HCT116 (cell line): ENCODE measurements at regions of chr2 and their contacts with region 1.

Region 1: GRCh38 chr2:68121873-68122679 is 35.6 kb upstream of the PNO1 start:
- DNase-seq: peak; percentile 70
- ATAC-seq: peak; percentile 91
- H3K4me3 ChIP-seq: no peak overlapping the region
- H3K27ac ChIP-seq: no peak overlapping the region
- H3K4me1 ChIP-seq: peaks cover 0 to 4% of the 10 kb centered on the region in 2 experiments; a peak in 1 of 4 replicates
- H3K27me3 ChIP-seq: no peaks in the 10 kb centered on the region
- CTCF ChIP-seq: peak; percentile 91 to 98 (median 97)
- POLR2A ChIP-seq: no peak
- RAD21 ChIP-seq: peak; percentile 95

Region 2: DNA sequence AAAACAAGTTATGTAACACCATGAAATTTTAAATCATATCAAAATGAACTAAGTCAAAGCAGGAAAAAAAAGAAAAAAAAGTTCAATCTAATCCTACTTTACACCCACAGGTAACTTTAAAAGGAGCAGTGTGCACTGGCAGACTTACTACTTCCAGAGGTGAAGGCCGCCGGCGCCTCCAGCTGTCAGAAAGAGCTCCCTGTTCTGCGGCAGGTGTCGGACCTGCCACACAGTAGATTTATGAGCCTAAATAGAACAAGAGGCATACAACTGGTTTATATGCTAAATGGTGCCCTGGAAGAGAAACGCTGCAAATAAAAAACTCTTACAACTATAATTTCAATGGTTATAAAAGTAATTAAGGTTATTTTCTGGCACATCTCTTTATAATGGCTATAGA is 12.5 kb after region 1 on chr2:
- CTCF ChIA-PET with region 1: interaction called, 14 read pairs
- POLR2A ChIA-PET with region 1: no interaction called
- RAD21 ChIA-PET with region 1: no interaction called
- intact Hi-C with region 1: no loop called
- DNase-seq: no peak
- ATAC-seq: no peak
- H3K4me3 ChIP-seq: no peak overlapping the region
- H3K27ac ChIP-seq: no peak overlapping the region
- H3K4me1 ChIP-seq: no peaks in the 10 kb centered on the region
- H3K27me3 ChIP-seq: no peaks in the 10 kb centered on the region
- CTCF ChIP-seq: 0 out of 6 replicates have a peak, but pooled peaks of 1 of the 3 experiments have one; percentile 19
- POLR2A ChIP-seq: no peak
- RAD21 ChIP-seq: no peak

Region 3: DNA sequence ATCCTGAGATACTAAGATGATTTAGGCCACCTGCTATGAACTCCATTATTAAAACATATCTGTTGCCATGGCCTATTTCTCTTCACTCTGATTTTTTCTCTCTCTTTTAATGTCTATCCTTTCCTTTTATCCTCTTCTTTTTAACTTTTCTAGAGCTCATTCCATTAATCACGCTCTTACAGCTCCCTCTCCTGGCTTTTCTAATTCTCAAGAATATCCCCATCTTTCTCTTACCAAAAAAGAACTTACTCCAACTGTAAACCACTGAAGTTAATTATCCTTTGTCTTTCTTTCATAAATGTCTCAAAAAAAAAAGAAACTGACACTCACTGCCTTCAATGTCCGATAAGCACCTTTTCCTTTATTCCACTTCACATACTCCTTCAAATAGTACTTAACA is 122.4 kb after region 1 on chr2:
- CTCF ChIA-PET with region 1: interaction called, 11 read pairs
- POLR2A ChIA-PET with region 1: no interaction called
- RAD21 ChIA-PET with region 1: no interaction called
- intact Hi-C with region 1: no loop called
- DNase-seq: no peak
- ATAC-seq: no peak
- H3K4me3 ChIP-seq: no peak overlapping the region
- H3K27ac ChIP-seq: no peak overlapping the region
- H3K4me1 ChIP-seq: peaks cover 0 to 2% of the 10 kb centered on the region in 2 experiments; a peak in 1 of 4 replicates
- H3K27me3 ChIP-seq: no peaks in the 10 kb centered on the region
- CTCF ChIP-seq: no peak; a peak in 1 of 6 replicates
- POLR2A ChIP-seq: no peak
- RAD21 ChIP-seq: peak; percentile 32; the same call in 1 of the 2 replicates

Region 4: GRCh38 chr2:68290901-68291300 is 168.8 kb after region 1 on chr2:
- CTCF ChIA-PET with region 1: interaction called, 31 read pairs
- POLR2A ChIA-PET with region 1: no interaction called
- RAD21 ChIA-PET with region 1: no interaction called
- intact Hi-C with region 1: loop called (anchors 1 kb)
- DNase-seq: no peak
- ATAC-seq: no peak
- H3K4me3 ChIP-seq: no peak overlapping the region
- H3K27ac ChIP-seq: no peak overlapping the region
- H3K4me1 ChIP-seq: no peaks in the 10 kb centered on the region
- H3K27me3 ChIP-seq: peaks cover 5% of the 10 kb centered on the region; the same call in 1 of the 2 replicates
- CTCF ChIP-seq: no peak
- POLR2A ChIP-seq: no peak
- RAD21 ChIP-seq: no peak

Region 5: GRCh38 chr2:68336192-68336591 is 214.1 kb after region 1 on chr2:
- CTCF ChIA-PET with region 1: no interaction called
- POLR2A ChIA-PET with region 1: no interaction called
- RAD21 ChIA-PET with region 1: no interaction called
- intact Hi-C with region 1: no loop called
- DNase-seq: peak; percentile 10
- ATAC-seq: 0 out of 2 replicates have a peak, but pooled peaks have one; percentile 53
- H3K4me3 ChIP-seq: no peak overlapping the region
- H3K27ac ChIP-seq: no peak overlapping the region
- H3K4me1 ChIP-seq: peaks cover 13 to 22% of the 10 kb centered on the region in 2 experiments; a peak in 3 of 4 replicates
- H3K27me3 ChIP-seq: no peaks in the 10 kb centered on the region
- CTCF ChIP-seq: no peak
- POLR2A ChIP-seq: no peak
- RAD21 ChIP-seq: no peak

Region 6: GRCh38 chr2:68441179-68441993 is 319.3 kb after region 1 on chr2:
- CTCF ChIA-PET with region 1: interaction called, 30 read pairs
- POLR2A ChIA-PET with region 1: no interaction called
- RAD21 ChIA-PET with region 1: interaction called in 1 of 2 experiments, 3 read pairs
- intact Hi-C with region 1: loop called (anchors 1 kb)
- DNase-seq: peak; percentile 82
- ATAC-seq: peak; percentile 98
- H3K4me3 ChIP-seq: no peak overlapping the region
- H3K27ac ChIP-seq: no peak overlapping the region
- H3K4me1 ChIP-seq: peaks cover 0 to 4% of the 10 kb centered on the region in 2 experiments; a peak in 1 of 4 replicates
- H3K27me3 ChIP-seq: no peaks in the 10 kb centered on the region
- CTCF ChIP-seq: peak; percentile 82 to 95 (median 84)
- POLR2A ChIP-seq: no peak
- RAD21 ChIP-seq: peak; percentile 83

Region 7: GRCh38 chr2:68632021-68632420 is 509.9 kb after region 1 on chr2:
- CTCF ChIA-PET with region 1: no interaction called
- POLR2A ChIA-PET with region 1: no interaction called
- RAD21 ChIA-PET with region 1: no interaction called
- intact Hi-C with region 1: no loop called
- DNase-seq: no peak
- ATAC-seq: no peak
- H3K4me3 ChIP-seq: no peak overlapping the region
- H3K27ac ChIP-seq: no peak overlapping the region
- H3K4me1 ChIP-seq: no peaks in the 10 kb centered on the region
- H3K27me3 ChIP-seq: no peaks in the 10 kb centered on the region
- CTCF ChIP-seq: no peak
- POLR2A ChIP-seq: no peak
- RAD21 ChIP-seq: no peak